ENCODE measurements at regions of chr13 and their contacts with region 1.

Region 1: GRCh38 chr13:110902370-110902769 is 12.5 kb downstream of the ANKRD10 start:
- DNase-seq: no peak
- H3K4me3 ChIP-seq: no peak overlapping the region
- H3K27ac ChIP-seq: peak overlapping the region in 1 of 2 experiments; percentile 61; a peak in 2 of 4 replicates
- H3K4me1 ChIP-seq: peaks cover 0 to 9% of the 10 kb centered on the region in 2 experiments; a peak in 3 of 4 replicates
- H3K27me3 ChIP-seq: no peaks in the 10 kb centered on the region
- CTCF ChIP-seq: no peak
- EP300 ChIP-seq: no peak
- RAD21 ChIP-seq: no peak

Region 2: DNA sequence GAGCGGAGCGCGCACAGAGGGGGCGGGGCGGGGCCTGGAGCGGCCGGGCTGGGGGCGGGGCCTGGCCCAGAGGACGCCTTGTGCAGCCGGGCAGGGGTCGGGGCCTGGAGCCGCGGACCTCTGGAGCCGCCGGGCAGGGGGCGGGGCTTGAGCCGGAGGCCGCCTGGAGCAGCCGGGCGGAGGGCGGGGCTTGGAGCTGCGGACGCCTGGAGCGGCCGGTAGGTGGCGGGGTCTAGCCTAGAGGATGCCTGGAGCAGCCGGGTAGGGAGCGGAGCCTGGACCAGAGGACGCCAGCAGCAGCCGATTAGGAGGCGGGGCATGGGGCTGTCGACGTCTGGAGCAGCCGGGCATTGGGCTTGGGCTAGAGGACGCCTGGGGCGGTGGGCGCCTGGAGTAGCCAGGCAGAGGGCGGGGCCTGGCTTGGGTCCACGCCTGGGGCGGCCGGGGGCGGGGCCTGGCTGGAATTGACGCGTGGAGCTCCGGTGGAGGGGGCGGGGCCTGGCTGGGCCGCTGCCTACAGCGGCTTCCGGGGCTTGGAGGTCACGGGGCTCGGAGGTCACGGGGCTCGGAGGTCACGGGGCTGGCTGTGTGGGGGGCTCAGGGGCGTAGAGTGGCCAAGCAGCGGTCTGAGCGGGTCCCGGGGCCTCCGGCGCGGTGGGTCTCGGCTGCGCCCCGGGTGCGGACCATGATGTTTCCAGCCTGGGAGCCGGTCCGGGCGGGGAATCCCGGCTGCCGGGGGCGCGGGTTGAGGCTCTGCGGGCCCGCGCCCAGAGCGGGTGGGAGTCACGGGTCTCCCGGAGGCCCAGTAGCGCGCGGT is 12.9 kb after region 1 on chr13 and contains the start of gene ANKRD10:
- CTCF ChIA-PET with region 1: interaction called, 25 read pairs
- POLR2A ChIA-PET with region 1: no interaction called
- DNase-seq: peak; percentile 98
- H3K4me3 ChIP-seq: peak within 1 kb of the TSS; percentile 90 to 99
- H3K27ac ChIP-seq: peak within 1 kb of the TSS; percentile 96
- H3K4me1 ChIP-seq: peaks cover 14 to 25% of the 10 kb centered on the region in 2 experiments; a peak in 3 of 4 replicates
- H3K27me3 ChIP-seq: no peaks in the 10 kb centered on the region
- CTCF ChIP-seq: peak; percentile 79
- EP300 ChIP-seq: no peak
- RAD21 ChIP-seq: peak; percentile 56
- polyA plus RNA-seq, gene ANKRD10: 53.2 and 77.8 TPM in 2 replicates

Measured in SK-N-SH (cell line).